ENCODE measurements at regions of chr11 and their contacts with region 1.

Region 1: GRCh38 chr11:84524422-84525051 is 1102.6 kb downstream of the DLG2 start:
- DNase-seq: no peak

Region 2: GRCh38 chr11:83827940-83828554 is 696.5 kb before region 1 on chr11:
- intact Hi-C with region 1: loop called (anchors 5 kb)
- DNase-seq: no peak

Region 3: DNA sequence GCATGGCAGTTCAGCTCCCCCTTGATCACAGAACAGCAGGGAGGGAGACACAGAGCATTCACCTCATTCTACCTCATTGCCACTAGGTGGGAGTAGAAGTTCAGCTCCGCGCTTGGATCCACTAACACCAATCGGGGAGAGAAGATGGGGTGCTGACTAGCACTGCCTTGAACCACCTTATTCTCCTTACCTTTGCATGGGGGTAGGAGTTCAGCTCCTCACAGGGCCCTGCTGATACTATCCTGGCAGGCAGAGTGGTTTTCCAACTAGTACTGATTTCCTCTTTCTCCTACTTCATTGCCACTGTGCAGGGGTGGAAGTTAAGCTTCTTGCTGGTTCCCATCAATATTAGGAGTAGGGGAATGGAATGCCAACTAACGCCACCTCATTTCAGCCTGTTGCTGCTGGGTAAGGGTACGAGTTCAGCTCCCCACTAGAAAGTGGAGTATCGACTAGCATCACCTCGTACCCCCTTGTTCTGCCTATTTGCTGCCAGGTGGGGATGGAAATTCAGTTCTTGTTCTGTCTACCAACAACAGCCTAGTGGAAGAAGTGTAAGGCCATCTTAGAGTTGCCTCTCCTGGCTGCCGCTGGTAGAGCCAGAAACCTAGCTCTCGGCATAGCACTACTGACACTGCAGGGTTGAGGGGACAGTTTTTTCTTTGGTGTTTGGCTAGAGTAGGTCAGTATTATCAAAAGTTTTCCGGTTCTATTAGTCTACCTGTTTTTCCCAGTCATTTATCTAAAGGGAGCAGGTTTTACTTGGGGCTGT is 687.5 kb before region 1 on chr11:
- intact Hi-C with region 1: loop called (anchors 5 kb)
- DNase-seq: peak in 8 of 10 donors; percentile 29 to 92 (median 55)

Region 4: GRCh38 chr11:84384731-84385130 is 139.8 kb before region 1 on chr11:
- intact Hi-C with region 1: loop called (anchors 5 kb)
- DNase-seq: peak in 6 of 10 donors; percentile 33 to 69 (median 58)

Region 5: DNA sequence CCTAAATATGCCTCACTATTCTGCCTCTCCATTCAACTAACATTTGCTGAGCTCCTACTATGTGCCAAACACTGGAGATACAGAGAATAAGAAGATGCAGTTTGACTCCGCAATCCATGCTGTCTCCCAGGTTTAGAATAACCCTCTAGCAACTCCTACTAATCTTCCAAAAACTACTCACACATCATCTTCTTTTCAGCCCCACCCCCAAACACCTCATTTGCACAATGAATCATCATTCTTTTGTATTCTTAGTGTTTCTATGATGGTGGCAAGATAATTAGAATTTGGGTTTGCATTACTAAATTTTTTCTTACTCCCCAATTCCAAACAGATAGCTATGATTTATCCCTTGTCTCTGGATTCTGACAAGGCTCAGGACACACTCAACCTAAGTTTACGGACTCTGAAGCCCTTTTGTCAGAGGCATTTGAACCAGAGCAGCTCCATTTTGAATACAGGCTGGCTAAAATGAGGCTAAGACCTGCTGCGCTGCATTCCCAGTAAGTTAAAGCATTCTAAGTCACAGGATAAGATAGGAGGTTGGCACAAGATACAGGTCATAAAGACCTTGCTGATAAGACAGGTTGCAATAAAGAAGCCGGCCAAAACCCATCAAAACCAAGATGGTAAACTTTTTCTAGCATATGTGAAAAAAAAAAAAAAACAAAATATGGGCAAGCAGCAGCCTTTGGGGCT is 63.7 kb after region 1 on chr11:
- intact Hi-C with region 1: no loop called
- DNase-seq: no peak

Measured in posterior cingulate gyrus (tissue), 11 donors.